BJ (cell line): ENCODE measurements at regions of chr9 and their contacts with region 1.

Region 1: GRCh38 chr9:69199769-69200470 is 25.8 kb downstream of the TJP2 start:
- DNase-seq: no peak
- H3K4me3 ChIP-seq: no peak overlapping the region
- H3K27me3 ChIP-seq: no peaks in the 10 kb centered on the region
- CTCF ChIP-seq: no peak

Region 2: DNA sequence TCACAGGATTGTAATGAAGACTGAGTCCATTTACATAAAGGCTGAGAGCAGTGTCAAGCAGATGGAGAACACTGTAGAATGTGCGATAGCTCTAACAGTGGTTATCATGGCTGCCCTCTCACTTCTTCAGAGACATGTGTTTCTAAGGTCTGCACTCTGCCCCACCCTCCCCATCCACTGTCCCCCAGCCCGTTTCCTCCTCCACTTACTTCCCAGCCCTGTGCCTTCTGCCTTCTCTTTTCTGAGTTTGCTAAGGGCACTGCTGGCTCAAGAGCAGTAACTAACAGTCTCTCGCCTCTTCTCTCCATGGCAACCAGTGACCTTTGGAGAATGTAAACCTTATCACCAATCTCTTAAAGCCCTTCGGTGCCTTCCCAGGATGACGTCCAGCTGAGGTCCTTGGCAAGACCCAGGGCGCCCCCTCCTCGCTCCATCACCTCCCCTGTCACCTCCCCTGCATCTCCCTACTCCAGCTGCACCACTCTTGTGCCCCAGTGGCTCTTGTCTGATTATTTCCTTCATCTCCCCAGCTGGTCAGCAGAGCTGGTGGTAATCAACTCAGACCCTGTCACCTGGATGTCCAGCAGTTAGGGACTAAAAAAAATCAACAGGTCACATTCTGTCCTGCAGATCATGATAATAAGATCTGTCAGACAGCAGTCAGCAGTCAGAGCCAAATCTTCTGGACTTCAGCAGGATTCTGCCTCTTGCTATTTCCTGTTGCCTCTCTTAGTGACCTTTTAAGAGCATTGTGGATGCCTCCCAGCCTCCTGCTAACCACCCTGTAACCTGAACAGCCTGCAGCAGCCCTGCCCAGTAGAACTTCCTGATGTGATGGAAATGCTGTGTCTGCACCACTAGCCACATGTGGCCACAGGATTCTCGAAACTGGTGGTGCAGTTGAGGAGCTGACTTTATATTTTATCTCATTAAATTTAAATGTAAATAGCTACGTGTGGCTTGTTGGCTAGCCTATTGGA is 155.4 kb before region 1 on chr9:
- CTCF ChIA-PET with region 1: interaction called, 297 read pairs
- POLR2A ChIA-PET with region 1: no interaction called
- DNase-seq: no peak
- H3K4me3 ChIP-seq: no peak overlapping the region
- H3K27me3 ChIP-seq: no peaks in the 10 kb centered on the region
- CTCF ChIP-seq: no peak